Esophagus muscularis mucosa (tissue), 4 donors: ENCODE measurements at regions of chr16 and their contacts with region 1.

Region 1: DNA sequence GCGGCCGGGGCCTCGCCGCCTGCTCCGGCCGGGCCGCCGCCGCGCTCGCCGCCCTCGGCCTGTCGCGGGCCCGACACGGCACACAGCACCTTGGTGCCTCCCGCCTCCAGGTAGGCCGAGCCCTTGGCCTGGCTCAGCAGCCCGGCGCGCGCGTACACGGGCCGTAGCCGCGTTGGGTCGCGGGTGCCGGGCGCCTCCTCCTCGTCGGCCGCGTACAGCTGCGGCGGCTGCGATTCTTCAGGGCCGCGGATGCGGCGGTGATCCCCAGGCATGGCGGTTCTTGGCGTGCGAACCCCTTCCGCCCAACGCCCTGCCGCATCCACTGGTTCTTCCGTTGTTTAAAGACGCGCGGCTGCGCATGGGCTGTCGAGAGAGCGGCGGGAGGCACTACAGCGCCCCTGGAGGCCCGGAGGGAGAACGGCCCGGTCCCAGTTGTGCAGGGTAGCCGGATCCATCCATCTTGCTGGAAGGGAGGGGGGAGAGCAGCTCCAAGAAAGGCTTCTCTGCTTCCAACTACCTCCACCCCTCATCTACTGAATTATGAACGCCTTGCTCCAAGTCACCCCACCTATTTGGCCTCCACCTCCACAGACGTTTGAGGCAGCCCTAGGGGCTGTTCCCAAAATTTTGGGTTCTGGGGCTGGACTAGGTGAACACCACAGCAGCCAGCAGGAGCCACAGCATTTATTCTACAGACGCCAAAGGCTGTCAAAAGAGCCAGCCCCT is at the start of gene EXOSC6:
- DNase-seq: peak; percentile 97
- H3K4me3 ChIP-seq: peak within 1 kb of the TSS; percentile 69 to 92 (median 83)
- H3K27ac ChIP-seq: peak within 1 kb of the TSS; percentile 84 to 94 (median 92)
- H3K4me1 ChIP-seq: peaks cover 20 to 40% (median 33%) of the 10 kb centered on the region in 4 donors
- H3K27me3 ChIP-seq: no peaks in the 10 kb centered on the region
- CTCF ChIP-seq: peak; percentile 92 to 98 (median 92)
- EP300 ChIP-seq: no peak
- POLR2A ChIP-seq: no peak
- total RNA-seq, gene EXOSC6: 17.0 to 38.0 (median 30.6) TPM

Region 2: GRCh38 chr16:69890114-69890891 is 361.5 kb before region 1 on chr16:
- intact Hi-C with region 1: no loop called
- DNase-seq: no peak
- H3K4me3 ChIP-seq: peak overlapping the region in 2 of 4 donors; percentile 6 to 13
- H3K27ac ChIP-seq: peak overlapping the region; percentile 74 to 87 (median 79)
- H3K4me1 ChIP-seq: peaks cover 10 to 19% (median 17%) of the 10 kb centered on the region in 4 donors
- H3K27me3 ChIP-seq: no peaks in the 10 kb centered on the region
- CTCF ChIP-seq: no peak
- EP300 ChIP-seq: no peak
- POLR2A ChIP-seq: no peak

Region 3: GRCh38 chr16:70162041-70162451 is 89.7 kb before region 1 on chr16:
- intact Hi-C with region 1: loop called (anchors 10 kb)
- DNase-seq: peak; percentile 90
- H3K4me3 ChIP-seq: no peak overlapping the region
- H3K27ac ChIP-seq: no peak overlapping the region
- H3K4me1 ChIP-seq: peaks cover 0 to 6% (median 0%) of the 10 kb centered on the region in 4 donors
- H3K27me3 ChIP-seq: no peaks in the 10 kb centered on the region
- CTCF ChIP-seq: no peak
- EP300 ChIP-seq: no peak
- POLR2A ChIP-seq: no peak

Region 4: GRCh38 chr16:70298988-70299938 is 47.5 kb after region 1 on chr16 and contains the start of gene DDX19B:
- intact Hi-C with region 1: no loop called
- DNase-seq: peak; percentile 93
- H3K4me3 ChIP-seq: peak within 1 kb of the TSS; percentile 70 to 98 (median 84)
- H3K27ac ChIP-seq: peak within 1 kb of the TSS; percentile 90 to 98 (median 96)
- H3K4me1 ChIP-seq: peaks cover 7 to 19% (median 19%) of the 10 kb centered on the region in 4 donors
- H3K27me3 ChIP-seq: no peaks in the 10 kb centered on the region
- CTCF ChIP-seq: peak in 1 of 3 experiments; percentile 16
- EP300 ChIP-seq: no peak
- POLR2A ChIP-seq: peak; percentile 77
- total RNA-seq, gene DDX19B: 36.1 to 48.7 (median 41.1) TPM